PC-9 (cell line): ENCODE measurements at regions of chr4 and their contacts with region 1.

Region 1: DNA sequence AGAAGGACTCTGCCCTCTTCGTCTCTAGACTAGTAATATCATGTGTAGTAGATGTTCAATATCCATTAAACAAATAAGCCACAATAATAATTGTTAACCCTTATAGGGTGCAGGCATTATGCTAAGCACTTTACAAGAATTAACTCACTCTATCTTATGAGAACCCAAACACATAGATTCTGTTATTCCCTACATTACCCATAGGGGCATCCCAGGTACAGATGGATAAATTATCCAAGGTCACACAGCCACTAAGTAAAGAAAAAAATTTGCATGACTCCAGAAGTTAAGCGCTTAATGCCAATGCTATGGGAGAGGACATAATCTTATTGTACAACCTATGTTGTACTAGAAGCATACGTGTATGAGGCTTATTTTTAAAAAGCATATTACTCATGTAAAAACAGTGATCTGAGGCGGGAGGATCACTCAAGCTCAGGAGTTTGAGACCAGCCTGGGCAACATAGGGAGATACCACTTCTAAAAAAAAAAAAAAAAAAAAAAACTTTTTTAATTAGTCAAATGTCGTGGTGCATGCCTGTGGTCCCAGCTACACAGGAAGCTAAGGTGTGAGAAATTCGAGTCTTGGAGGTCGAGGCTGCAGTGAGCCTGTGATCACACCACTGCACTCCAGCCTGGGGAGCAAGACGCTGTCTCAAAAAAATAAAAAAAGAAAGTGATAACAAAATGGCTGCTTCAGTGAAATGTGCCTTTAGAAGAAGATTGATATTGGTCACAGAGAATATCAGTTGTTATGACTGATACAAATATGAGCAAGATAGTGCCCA is 13.6 kb downstream of the LDB2 start:
- DNase-seq: no peak
- H3K4me3 ChIP-seq: no peak overlapping the region
- H3K27ac ChIP-seq: no peak overlapping the region
- H3K4me1 ChIP-seq: no peaks in the 10 kb centered on the region
- H3K27me3 ChIP-seq: no peaks in the 10 kb centered on the region
- CTCF ChIP-seq: 0 out of 2 replicates have a peak, but pooled peaks have one; percentile 31

Region 2: DNA sequence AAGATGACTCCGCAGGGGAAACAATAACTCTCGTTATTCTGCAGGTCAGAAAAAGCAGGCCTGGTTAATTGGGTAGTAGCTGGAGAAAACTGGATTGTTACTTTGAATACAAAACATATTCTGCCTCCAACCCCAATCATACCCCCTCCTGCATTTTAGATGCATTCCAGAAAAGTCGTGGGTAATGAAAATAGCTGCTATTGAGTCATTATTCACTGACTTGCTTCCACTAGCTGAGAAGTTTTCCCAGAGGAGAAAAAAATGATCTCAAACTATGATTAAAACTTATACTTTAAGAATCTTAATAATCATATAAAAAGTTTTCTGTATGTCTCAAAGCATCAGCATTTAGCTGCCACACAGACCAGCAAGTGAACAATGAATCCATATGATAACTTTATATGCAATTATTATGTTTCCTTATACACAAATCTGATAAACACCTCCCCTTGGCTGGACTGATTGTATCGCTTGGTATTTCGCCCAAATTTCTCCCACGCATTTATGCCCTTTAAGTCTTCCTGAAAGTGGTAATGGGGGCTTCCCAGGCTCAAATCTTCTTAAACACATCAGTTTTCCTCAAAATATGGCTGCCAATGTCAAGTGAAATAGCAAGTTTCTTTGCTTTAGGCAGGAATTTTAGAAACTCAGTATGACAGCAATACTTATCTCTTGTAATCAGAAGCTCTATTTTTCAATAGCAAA is 167.4 kb before region 1 on chr4:
- CTCF ChIA-PET with region 1: no interaction called
- POLR2A ChIA-PET with region 1: no interaction called
- intact Hi-C with region 1: no loop called
- DNase-seq: no peak
- H3K4me3 ChIP-seq: no peak overlapping the region
- H3K27ac ChIP-seq: no peak overlapping the region
- H3K4me1 ChIP-seq: no peaks in the 10 kb centered on the region
- H3K27me3 ChIP-seq: no peaks in the 10 kb centered on the region
- CTCF ChIP-seq: no peak

Region 3: DNA sequence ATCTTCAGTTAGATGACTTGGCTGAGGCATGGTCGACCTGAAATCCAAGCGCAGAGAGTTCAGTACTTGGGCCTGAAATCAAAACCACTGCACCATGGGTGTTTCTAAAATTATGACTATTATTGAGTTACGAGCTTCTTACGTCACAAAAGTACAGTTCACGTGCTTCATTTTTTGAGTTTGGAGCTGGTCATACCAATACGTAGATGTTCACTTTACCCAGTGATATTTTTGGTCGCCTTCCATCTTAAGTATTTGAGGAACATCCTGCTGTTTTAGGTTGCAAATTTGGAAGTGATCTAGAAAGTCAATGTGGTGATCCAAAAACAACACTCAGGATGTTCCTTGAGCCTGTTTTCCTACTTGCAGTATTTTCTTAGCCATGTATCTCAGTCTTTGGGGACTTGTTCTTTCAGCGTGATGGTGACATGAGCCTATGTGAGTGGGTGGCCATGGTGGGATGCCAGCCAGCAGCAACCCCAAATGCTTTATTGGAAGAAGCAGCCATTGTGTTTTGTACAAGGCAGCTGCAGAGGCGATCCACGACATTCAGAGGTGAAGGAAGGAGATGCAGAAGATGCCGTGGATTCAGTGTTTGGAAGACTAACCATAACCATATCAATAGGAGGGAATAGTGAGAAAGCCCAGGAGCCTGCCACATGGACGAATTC is 15.2 kb before region 1 on chr4:
- CTCF ChIA-PET with region 1: interaction called, 17 read pairs
- POLR2A ChIA-PET with region 1: no interaction called
- intact Hi-C with region 1: no loop called
- DNase-seq: no peak
- H3K4me3 ChIP-seq: no peak overlapping the region
- H3K27ac ChIP-seq: no peak overlapping the region
- H3K4me1 ChIP-seq: no peaks in the 10 kb centered on the region
- H3K27me3 ChIP-seq: no peaks in the 10 kb centered on the region; the same call in 1 of the 2 replicates
- CTCF ChIP-seq: no peak